ENCODE measurements at regions of chr22 and their contacts with region 1.

Region 1: DNA sequence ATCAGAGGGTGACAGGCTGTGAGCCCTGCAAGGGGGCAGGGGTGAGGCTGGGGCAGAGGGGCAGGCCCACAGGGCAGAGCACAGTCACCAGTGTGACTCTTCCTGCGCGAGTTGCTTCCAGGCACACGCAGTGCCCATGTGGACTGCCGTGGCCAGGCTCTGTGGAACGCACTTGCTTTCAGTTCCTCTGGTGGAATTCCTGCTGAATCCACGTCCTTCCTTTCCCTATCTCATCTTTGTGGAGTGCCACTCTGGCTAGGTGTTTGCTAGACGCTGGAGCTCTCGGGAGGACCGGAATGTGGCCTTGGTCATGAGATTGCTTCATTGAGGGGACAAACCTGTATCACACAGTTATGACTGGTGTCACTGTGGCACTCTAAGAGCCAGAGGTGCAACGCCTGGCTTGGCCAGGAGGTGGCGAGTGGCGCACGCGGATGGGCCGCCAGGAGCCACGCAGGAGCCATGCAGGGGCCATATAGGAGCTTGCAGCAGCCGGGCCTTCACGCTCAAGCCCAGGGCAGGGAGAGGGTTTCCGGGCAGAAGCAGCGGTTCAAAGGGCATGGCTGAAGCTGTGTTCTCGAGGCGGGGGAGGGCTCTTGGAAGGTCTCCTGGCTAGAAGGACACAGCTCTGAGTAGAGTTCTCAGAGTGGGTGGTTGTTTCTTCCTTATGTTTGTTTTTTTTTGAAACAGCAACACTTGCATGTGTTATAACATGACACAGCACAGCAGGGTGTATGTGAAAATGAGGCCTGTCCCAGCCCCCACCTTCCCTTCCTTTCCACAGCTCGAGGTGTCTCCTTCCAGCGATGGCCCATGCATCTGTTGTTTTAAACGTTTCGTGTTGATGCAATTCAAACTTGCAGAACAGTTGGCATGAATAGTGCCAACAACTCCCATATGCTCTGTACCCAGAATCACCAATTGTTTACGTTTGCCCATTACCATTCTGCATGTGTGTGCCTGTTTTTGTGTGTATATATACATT is 36.2 kb downstream of the TBC1D22A start:
- DNase-seq: peak; percentile 41
- H3K4me3 ChIP-seq: no peak overlapping the region
- H3K27ac ChIP-seq: no peak overlapping the region
- H3K27me3 ChIP-seq: no peaks in the 10 kb centered on the region
- CTCF ChIP-seq: peak; percentile 96

Region 2: DNA sequence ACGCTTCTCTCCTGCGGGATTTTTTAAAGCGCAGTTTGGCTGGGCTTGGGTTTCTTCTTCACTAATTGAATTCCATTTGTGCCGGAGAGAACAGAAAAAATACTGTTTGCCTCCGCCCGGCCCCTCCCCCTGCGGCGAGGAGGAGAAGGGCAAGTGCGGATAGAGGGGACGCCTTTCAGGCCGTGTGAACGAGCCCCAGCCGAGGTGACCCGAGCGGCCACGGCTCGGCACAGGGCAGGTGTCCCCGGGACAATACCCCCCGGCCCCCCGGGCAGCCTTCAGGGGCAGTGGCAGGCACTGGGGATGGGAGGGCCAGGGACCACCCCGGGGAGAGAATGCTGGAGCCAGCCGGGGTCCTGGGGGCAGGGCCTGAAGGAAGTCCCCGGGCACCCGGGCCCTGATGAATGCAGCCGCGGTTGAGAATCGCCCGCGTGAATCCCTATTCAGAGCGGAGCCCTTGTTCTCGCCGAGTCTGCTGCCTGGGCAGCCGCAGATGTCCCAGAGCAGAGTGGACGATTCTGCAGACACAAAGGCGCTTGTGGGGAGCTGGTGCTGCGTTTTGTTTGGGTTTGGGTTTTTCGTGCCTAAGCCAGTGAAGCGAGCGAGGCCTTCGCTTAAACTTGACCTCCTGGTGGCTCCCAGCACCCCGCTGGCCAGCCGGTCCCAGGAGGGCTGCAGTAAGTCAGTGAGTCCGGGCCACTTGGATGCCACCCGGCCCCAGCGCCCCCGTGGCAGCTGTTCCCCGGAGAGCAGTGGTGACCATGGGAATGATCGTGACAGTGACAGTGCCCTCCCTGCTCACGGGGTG is 917.7 kb before region 1 on chr22:
- CTCF ChIA-PET with region 1: no interaction called
- POLR2A ChIA-PET with region 1: no interaction called
- DNase-seq: no peak
- H3K4me3 ChIP-seq: peak overlapping the region; percentile 1; the same call in 1 of the 2 replicates
- H3K27ac ChIP-seq: no peak overlapping the region
- H3K27me3 ChIP-seq: peaks cover 60% of the 10 kb centered on the region
- CTCF ChIP-seq: no peak

Region 3: GRCh38 chr22:46592390-46592872 is 206.2 kb before region 1 on chr22:
- CTCF ChIA-PET with region 1: no interaction called
- POLR2A ChIA-PET with region 1: no interaction called
- DNase-seq: peak; percentile 13
- H3K4me3 ChIP-seq: peak overlapping the region; percentile 31
- H3K27ac ChIP-seq: peak overlapping the region; percentile 31
- H3K27me3 ChIP-seq: peaks cover 8% of the 10 kb centered on the region
- CTCF ChIP-seq: no peak

Region 4: GRCh38 chr22:46696229-46696518 is 102.5 kb before region 1 on chr22:
- CTCF ChIA-PET with region 1: no interaction called
- POLR2A ChIA-PET with region 1: no interaction called
- DNase-seq: no peak
- H3K4me3 ChIP-seq: no peak overlapping the region
- H3K27ac ChIP-seq: no peak overlapping the region
- H3K27me3 ChIP-seq: no peaks in the 10 kb centered on the region
- CTCF ChIP-seq: no peak

Region 5: GRCh38 chr22:46815896-46816731 is 17.5 kb after region 1 on chr22:
- CTCF ChIA-PET with region 1: interaction called, 11 read pairs
- POLR2A ChIA-PET with region 1: no interaction called
- DNase-seq: no peak
- H3K4me3 ChIP-seq: no peak overlapping the region
- H3K27ac ChIP-seq: peak overlapping the region; percentile 77
- H3K27me3 ChIP-seq: no peaks in the 10 kb centered on the region
- CTCF ChIP-seq: no peak

Region 6: GRCh38 chr22:46829941-46830715 is 31.5 kb after region 1 on chr22:
- CTCF ChIA-PET with region 1: interaction called, 15 read pairs
- POLR2A ChIA-PET with region 1: no interaction called
- DNase-seq: no peak
- H3K4me3 ChIP-seq: no peak overlapping the region
- H3K27ac ChIP-seq: peak overlapping the region; percentile 89
- H3K27me3 ChIP-seq: no peaks in the 10 kb centered on the region
- CTCF ChIP-seq: no peak

Region 7: DNA sequence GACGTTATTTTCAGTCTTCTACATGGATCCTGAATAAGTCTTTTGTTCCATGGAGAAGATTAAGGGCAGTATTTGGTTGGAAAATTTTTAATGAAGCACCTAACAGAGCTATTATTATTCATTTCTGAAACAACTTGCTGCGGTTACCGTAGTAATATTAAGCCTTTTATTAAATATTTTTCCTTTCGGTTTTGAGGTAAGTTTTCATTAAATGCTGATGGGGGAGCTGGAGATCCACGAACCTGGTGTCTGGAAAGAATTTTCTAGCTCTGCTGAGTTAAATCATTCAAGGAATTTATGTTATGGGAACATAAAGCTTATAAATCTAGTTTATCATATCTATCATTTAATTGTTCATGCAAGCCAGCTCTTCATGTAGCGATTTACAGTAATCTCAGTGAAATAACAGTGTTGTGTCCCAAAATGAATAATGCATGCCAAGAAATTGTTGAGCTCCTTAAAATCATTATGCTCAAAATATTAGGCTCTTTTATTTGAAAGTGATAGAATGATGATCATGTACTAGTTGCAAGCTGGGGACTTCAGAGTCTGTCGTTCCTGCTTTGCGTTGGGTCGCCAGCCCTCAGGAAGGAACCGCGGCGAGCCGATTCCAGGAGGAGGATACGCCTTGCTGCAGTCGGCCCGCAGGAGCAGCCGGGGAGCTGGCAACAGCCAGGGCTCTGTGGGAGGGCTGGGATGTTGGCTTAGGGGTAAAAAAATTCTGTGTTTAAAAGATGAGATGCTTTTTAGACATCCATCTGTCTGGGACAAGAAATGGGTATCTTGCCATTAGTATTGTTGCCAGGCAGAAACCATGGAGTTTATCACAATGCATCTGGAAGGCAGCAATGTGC is 46.9 kb after region 1 on chr22:
- CTCF ChIA-PET with region 1: interaction called, 25 read pairs
- POLR2A ChIA-PET with region 1: no interaction called
- DNase-seq: no peak
- H3K4me3 ChIP-seq: peak overlapping the region; percentile 36
- H3K27ac ChIP-seq: peak overlapping the region; percentile 39
- H3K27me3 ChIP-seq: no peaks in the 10 kb centered on the region
- CTCF ChIP-seq: peak; percentile 66

Region 8: GRCh38 chr22:47107431-47107830 is 308.8 kb after region 1 on chr22:
- CTCF ChIA-PET with region 1: interaction called, 14 read pairs
- POLR2A ChIA-PET with region 1: no interaction called
- DNase-seq: peak; percentile 48
- H3K4me3 ChIP-seq: no peak overlapping the region
- H3K27ac ChIP-seq: peak overlapping the region; percentile 86
- H3K27me3 ChIP-seq: no peaks in the 10 kb centered on the region
- CTCF ChIP-seq: no peak

Region 9: DNA sequence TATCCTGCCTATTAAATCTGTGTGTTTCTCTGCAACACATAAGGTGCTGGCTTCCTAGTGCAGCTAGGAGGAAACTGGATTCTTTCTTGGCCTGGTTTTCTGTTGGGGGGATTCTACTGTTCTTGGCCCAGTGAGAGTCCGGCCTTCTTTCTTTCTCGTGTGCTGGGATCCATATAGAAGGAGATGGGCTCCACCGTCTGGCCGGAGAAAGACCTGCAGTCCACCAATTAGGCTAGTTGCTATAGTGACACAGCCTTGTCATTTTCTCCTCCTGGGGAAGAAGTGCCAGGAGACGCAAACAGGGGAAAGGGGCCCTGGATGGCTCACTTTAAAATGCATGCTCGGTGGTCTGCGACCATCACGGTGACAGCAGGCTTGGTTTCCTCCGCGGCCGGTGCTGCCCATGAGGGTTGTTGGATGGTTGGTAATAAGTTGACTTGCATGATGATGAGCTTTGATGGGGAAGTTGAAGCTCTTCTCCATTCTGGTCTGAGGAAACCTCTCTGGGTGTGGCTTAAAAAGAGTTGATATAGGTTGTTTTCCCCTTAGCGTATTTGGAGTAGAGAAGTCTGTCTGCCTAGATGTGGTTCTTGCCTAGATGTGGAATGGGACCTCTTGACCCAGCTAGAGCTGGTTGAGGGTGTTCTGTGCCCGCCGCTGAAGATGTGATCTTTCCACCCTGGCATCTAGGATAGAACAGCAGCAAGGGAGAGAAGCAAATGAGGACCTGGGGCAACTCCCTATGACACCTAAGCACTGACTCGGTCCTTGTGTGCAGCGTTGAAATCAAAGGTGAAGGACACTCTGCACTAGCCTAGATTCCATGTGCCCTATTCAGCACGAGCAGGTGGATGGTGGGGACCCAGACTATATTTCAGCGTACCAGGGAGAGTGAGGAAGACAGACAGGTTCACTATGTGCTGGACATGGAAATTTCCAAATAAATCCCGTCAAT is 1694.0 kb after region 1 on chr22:
- CTCF ChIA-PET with region 1: interaction called, 30 read pairs
- POLR2A ChIA-PET with region 1: no interaction called
- DNase-seq: peak; percentile 4
- H3K4me3 ChIP-seq: no peak overlapping the region
- H3K27ac ChIP-seq: no peak overlapping the region
- H3K27me3 ChIP-seq: peaks cover 19% of the 10 kb centered on the region
- CTCF ChIP-seq: peak; percentile 80

Measured in AG04450 (cell line).